CD8-positive, alpha-beta T cell (primary cell): ENCODE measurements at regions of chr18 and their contacts with region 1.

Region 1: GRCh38 chr18:77000527-77000926 is 132.1 kb downstream of the MBP start:
- DNase-seq: peak; percentile 24 to 71 (median 52)
- ATAC-seq: peak; percentile 66
- H3K4me3 ChIP-seq: no peak overlapping the region
- H3K4me3 Mint-ChIP-seq: no peak overlapping the region
- H3K27ac ChIP-seq: no peak overlapping the region
- H3K27ac Mint-ChIP-seq: no peak overlapping the region
- H3K4me1 ChIP-seq: peaks cover 19% of the 10 kb centered on the region
- H3K4me1 Mint-ChIP-seq: peaks cover 27% of the 10 kb centered on the region
- H3K27me3 ChIP-seq: no peaks in the 10 kb centered on the region
- H3K27me3 Mint-ChIP-seq: no peaks in the 10 kb centered on the region
- CTCF ChIP-seq: peak; percentile 97

Region 2: DNA sequence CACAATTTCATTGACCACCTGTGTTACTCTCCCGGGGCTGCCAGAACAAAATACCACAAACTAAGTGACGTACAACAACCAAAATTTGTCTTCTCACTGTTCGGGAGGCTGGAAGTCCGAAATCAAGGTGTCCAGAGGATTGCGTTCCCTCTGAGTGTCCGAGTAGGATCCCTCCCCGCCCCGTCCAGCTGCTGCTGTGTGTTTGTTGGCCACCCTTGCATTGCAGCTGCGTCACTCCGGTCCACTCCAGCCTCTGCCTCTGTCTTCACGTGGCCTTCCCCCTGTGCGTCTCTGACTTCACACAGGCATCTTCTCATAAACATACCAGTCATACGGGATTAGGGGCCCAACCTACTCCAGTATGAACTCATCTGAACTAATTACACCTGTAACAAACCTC is 1321.2 kb before region 1 on chr18:
- CTCF ChIA-PET with region 1: no interaction called
- POLR2A ChIA-PET with region 1: no interaction called
- intact Hi-C with region 1: no loop called
- DNase-seq: no peak
- ATAC-seq: no peak
- H3K4me3 ChIP-seq: no peak overlapping the region
- H3K4me3 Mint-ChIP-seq: no peak overlapping the region
- H3K27ac ChIP-seq: no peak overlapping the region
- H3K27ac Mint-ChIP-seq: no peak overlapping the region
- H3K4me1 ChIP-seq: no peaks in the 10 kb centered on the region
- H3K4me1 Mint-ChIP-seq: no peaks in the 10 kb centered on the region
- H3K27me3 ChIP-seq: no peaks in the 10 kb centered on the region
- H3K27me3 Mint-ChIP-seq: peaks cover 2% of the 10 kb centered on the region
- CTCF ChIP-seq: no peak

Region 3: GRCh38 chr18:76982841-76983587 is 17.5 kb before region 1 on chr18:
- CTCF ChIA-PET with region 1: interaction called, 74 read pairs
- POLR2A ChIA-PET with region 1: interaction called, 3 read pairs
- intact Hi-C with region 1: no loop called
- DNase-seq: peak; percentile 72 to 89 (median 84)
- ATAC-seq: peak; percentile 100
- H3K4me3 ChIP-seq: no peak overlapping the region
- H3K4me3 Mint-ChIP-seq: no peak overlapping the region
- H3K27ac ChIP-seq: no peak overlapping the region
- H3K27ac Mint-ChIP-seq: no peak overlapping the region
- H3K4me1 ChIP-seq: peaks cover 3% of the 10 kb centered on the region
- H3K4me1 Mint-ChIP-seq: peaks cover 7% of the 10 kb centered on the region
- H3K27me3 ChIP-seq: no peaks in the 10 kb centered on the region
- H3K27me3 Mint-ChIP-seq: no peaks in the 10 kb centered on the region
- CTCF ChIP-seq: peak; percentile 93

Region 4: DNA sequence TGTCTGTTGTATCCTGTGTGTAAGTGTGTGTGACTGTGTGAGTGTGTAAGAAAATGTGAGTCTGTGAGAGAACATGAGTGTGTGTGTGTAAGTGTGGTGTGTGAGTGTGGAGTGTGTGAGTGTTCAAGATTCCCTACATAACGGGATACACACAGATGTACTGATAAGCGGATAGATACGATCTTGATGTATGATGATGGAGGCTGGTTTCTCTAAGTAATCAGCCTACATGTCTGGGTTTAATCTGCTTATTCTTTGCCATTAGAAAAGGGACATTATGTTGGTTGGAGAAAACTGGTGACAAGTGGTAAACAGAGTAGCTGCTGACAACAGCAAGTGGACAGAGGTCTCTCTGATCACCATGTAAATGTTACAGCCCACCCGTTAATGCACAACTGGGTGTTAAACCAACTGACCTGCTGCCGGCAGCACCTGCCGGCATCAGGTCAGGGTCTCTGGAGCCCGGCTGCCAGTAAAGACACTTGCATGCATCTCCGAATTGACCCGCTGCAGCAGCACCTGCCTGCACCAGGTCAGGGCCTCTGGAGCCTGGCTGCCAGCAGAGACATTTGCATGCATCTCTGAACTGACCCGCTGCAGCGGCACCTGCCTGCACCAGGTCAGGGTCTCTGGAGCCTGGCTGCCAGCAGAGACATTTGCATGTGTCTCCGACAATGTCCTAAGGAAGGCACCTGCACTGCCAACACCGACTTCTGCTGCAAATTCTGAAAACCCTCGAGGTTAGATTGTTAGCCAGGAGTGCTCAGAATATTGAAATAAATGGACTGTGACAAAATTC is 44.5 kb after region 1 on chr18:
- CTCF ChIA-PET with region 1: interaction called, 11 read pairs
- POLR2A ChIA-PET with region 1: no interaction called
- intact Hi-C with region 1: no loop called
- DNase-seq: no peak
- ATAC-seq: no peak
- H3K4me3 ChIP-seq: no peak overlapping the region
- H3K4me3 Mint-ChIP-seq: no peak overlapping the region
- H3K27ac ChIP-seq: no peak overlapping the region
- H3K27ac Mint-ChIP-seq: peak overlapping the region; percentile 4
- H3K4me1 ChIP-seq: no peaks in the 10 kb centered on the region
- H3K4me1 Mint-ChIP-seq: peaks cover 48% of the 10 kb centered on the region
- H3K27me3 ChIP-seq: no peaks in the 10 kb centered on the region
- H3K27me3 Mint-ChIP-seq: no peaks in the 10 kb centered on the region
- CTCF ChIP-seq: no peak

Region 5: DNA sequence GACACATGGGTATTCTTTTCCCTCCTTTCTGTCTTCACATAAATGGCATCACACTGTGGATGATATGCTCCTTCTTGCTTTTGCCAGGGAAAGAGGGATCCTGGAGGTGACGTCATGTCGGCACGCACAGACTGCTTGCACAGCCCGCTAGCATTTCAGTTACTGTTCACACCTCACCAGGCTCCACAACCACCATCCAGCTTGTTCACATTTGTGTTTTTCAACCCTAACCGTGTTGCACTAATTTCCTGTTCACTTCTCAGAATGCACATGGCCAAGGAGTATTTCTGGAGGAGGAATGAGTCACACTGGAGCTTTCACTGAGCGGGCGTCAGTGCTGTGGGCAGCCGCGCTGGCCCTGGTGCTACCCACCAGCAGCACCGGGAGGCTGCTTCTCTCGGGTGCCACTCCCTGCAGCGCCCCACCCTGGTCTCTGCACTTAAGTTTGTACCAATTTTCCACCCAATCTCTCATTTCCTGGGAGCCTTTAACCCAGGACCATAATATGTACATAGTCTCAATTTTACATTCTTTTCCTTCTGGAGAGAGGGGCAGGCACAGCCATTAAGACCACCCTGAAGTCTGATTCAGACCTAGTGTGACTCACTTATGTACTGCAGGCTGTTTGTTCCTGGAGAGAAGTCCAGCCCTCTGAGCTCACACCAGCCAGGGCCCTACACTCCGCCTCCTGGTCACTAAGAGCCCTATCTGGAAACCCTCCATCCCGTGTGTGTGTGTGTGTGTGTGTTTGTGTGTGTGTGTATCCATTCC is 66.9 kb after region 1 on chr18:
- CTCF ChIA-PET with region 1: interaction called, 20 read pairs
- POLR2A ChIA-PET with region 1: interaction called, 4 read pairs
- intact Hi-C with region 1: no loop called
- DNase-seq: peak in 8 of 9 experiments; percentile 48 to 90 (median 74)
- ATAC-seq: peak; percentile 20
- H3K4me3 ChIP-seq: peak overlapping the region in 1 of 2 experiments; percentile 9
- H3K4me3 Mint-ChIP-seq: peak overlapping the region; percentile 66
- H3K27ac ChIP-seq: peak overlapping the region; percentile 58 to 87
- H3K27ac Mint-ChIP-seq: peak overlapping the region; percentile 97
- H3K4me1 ChIP-seq: peaks cover 99% of the 10 kb centered on the region
- H3K4me1 Mint-ChIP-seq: peaks cover 94% of the 10 kb centered on the region
- H3K27me3 ChIP-seq: no peaks in the 10 kb centered on the region
- H3K27me3 Mint-ChIP-seq: no peaks in the 10 kb centered on the region
- CTCF ChIP-seq: no peak

Region 6: GRCh38 chr18:77147418-77147852 is 146.9 kb after region 1 on chr18:
- CTCF ChIA-PET with region 1: interaction called, 10 read pairs
- POLR2A ChIA-PET with region 1: no interaction called
- intact Hi-C with region 1: loop called in 1 of 2 experiments (anchors 5 kb)
- DNase-seq: peak in 4 of 9 experiments; percentile 36 to 60 (median 40)
- ATAC-seq: peak; percentile 88
- H3K4me3 ChIP-seq: no peak overlapping the region
- H3K4me3 Mint-ChIP-seq: peak overlapping the region; percentile 6
- H3K27ac ChIP-seq: peak overlapping the region in 1 of 2 experiments; percentile 52
- H3K27ac Mint-ChIP-seq: peak overlapping the region; percentile 85
- H3K4me1 ChIP-seq: peaks cover 22% of the 10 kb centered on the region
- H3K4me1 Mint-ChIP-seq: peaks cover 27% of the 10 kb centered on the region
- H3K27me3 ChIP-seq: no peaks in the 10 kb centered on the region
- H3K27me3 Mint-ChIP-seq: no peaks in the 10 kb centered on the region
- CTCF ChIP-seq: no peak

Region 7: DNA sequence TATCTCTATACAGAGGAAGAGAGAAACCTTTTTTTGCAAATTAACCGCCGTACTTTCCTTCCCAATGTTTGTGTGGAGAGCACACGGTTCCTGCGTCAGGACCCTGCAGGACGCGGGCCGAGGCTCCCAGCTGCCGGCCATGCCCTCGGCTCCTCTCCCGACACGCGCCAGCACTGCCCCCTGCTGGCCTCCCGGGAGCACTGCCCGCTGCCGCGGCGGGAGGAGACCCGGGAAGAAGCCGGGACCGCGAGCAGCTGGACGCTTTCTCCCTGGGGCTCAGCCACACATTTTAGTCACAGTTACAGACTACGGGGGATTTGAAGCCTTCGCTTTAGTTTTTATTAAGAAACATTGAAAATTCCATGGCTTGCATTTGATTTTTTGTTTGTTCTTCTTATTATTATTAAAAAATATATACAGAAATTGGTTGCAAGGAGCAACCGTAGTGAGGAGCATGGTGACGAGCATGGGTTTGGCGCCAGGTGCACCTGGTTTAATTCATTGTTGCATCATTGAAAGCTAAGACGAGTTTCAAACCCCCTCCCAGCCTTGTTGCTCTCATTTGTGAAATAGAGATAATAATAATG is 650.4 kb after region 1 on chr18:
- CTCF ChIA-PET with region 1: interaction called, 3 read pairs
- POLR2A ChIA-PET with region 1: no interaction called
- intact Hi-C with region 1: loop called in 1 of 2 experiments (anchors 1 kb)
- DNase-seq: peak in 8 of 9 experiments; percentile 14 to 68 (median 44)
- ATAC-seq: peak; percentile 38
- H3K4me3 ChIP-seq: no peak overlapping the region
- H3K4me3 Mint-ChIP-seq: no peak overlapping the region
- H3K27ac ChIP-seq: no peak overlapping the region
- H3K27ac Mint-ChIP-seq: no peak overlapping the region
- H3K4me1 ChIP-seq: peaks cover 5% of the 10 kb centered on the region
- H3K4me1 Mint-ChIP-seq: peaks cover 1% of the 10 kb centered on the region
- H3K27me3 ChIP-seq: peaks cover 0 to 3% of the 10 kb centered on the region in 2 experiments
- H3K27me3 Mint-ChIP-seq: peaks cover 15% of the 10 kb centered on the region
- CTCF ChIP-seq: peak; percentile 54